Activated T-helper 1 cell treated with anti-CD3 and anti-CD28 coated beads, Interleukin-12 subunit alpha, Interleukin-12 subunit beta, Interleukin-2, Interleukin-4 antibody, amounts not matched to agents 30 ng/mL and 10 ng/mL and 1 ng/mL, durations not matched to agents 14 hours and 24 hours and 36 hours (primary cell): ENCODE measurements at regions of chr5 and their contacts with region 1.

Region 1: GRCh38 chr5:157245477-157245876 is 20.4 kb upstream of the CYFIP2 start:
- DNase-seq: no peak
- H3K4me3 Mint-ChIP-seq: no peak overlapping the region
- H3K27ac Mint-ChIP-seq: peak overlapping the region; percentile 78
- H3K4me1 Mint-ChIP-seq: peaks cover 79% of the 10 kb centered on the region
- H3K27me3 Mint-ChIP-seq: no peaks in the 10 kb centered on the region

Region 2: GRCh38 chr5:157233515-157233914 is 12.0 kb before region 1 on chr5:
- intact Hi-C with region 1: loop called (anchors 1 kb)
- DNase-seq: no peak
- H3K4me3 Mint-ChIP-seq: no peak overlapping the region
- H3K27ac Mint-ChIP-seq: peak overlapping the region; percentile 46
- H3K4me1 Mint-ChIP-seq: peaks cover 37% of the 10 kb centered on the region
- H3K27me3 Mint-ChIP-seq: no peaks in the 10 kb centered on the region